ENCODE measurements at regions of chr2 and their contacts with region 1.

Region 1: DNA sequence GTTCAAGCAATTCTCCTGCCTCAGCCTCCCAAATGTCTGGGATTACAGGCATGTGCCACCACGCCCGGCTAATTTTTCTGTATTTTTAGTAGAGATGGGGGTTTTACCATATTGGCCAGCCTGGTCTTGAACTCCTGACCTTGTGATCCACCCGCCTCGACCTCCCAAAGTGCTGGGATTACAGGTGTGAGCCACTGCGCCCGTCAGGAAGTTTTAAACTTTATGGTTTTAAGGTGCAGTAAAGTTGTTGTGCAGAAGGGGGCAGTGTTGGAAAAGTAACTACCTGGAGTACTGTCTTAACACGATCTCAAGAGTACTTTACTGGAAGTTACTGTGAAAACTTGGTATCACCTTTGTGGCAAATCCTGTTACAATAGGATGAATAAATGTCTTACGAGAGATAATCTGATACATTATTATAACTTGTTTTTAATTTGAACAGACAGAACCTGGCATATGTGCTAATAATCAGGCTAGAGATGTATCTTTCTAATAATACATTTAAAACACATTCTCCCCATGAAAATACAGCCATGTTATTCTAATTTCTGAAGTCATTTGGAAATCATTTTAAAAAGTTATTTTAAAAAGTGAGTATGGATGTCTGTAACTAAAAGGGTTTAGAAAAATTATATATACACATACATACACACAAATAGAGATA is 10.8 kb downstream of the SPDYA start:
- DNase-seq: no peak
- H3K4me3 ChIP-seq: no peak overlapping the region
- H3K27ac ChIP-seq: no peak overlapping the region
- H3K27me3 ChIP-seq: no peaks in the 10 kb centered on the region
- CTCF ChIP-seq: peak; percentile 67

Region 2: DNA sequence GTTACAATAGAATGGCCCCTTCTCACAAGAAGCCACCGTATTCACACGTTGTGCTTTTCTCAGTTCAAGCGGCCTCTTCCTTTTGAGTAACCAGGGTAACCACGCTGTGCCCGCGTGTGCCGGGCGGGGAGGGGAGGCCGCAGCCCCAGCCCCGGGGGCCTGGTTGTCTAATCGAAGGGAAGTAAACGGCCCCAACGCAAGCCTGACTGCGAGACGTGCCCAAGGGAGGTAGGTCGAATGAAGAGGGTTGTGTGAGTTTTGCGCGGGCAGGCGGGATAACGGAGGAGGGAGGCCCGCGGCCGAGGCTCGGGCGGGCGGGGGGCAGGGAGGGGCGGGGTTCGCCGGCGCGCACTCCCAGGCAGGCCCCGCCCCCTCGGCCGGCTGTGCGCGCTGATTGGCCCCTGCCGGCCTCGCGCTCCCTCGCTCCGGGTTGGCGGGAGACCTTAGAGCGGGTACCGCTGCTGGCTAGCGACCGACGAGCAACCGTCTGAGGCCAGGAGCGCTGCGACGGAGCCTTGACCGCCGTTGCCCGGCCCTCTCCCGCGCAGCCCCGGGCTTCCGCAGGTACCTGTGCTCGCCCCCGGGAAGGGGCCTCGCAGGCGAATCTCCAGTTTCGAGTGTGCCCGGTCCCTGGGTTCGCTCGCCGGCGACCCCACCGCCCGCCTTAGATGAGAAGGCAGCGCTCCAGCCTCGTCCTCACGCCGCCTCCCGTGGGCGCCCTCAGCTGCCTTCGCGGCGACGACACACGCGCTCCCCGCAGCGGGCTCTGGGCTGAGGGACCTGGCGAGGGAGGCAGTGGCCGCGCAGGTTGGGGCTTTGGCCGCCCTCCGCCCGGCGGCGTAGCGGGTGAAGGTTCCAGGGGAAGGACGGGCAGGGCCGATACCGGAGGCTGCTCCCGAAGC is 10.8 kb before region 1 on chr2 and contains the start of gene SPDYA:
- CTCF ChIA-PET with region 1: interaction called, 11 read pairs
- POLR2A ChIA-PET with region 1: no interaction called
- DNase-seq: no peak
- H3K4me3 ChIP-seq: peak within 1 kb of the TSS; percentile 58
- H3K27ac ChIP-seq: no peak within 1 kb of the TSS
- H3K27me3 ChIP-seq: no peaks in the 10 kb centered on the region
- CTCF ChIP-seq: no peak
- polyA plus RNA-seq, gene SPDYA: 0.07 and 0.22 TPM in 2 replicates